Activated T-helper 2 cell treated with anti-CD3 and anti-CD28 coated beads, Interferon-gamma antibody, Interleukin-2, Interleukin-4, amounts not matched to agents 10 μg/mL and 5 μg/mL and 100 μg/mL, durations not matched to agents 14 hours and 24 hours and 36 hours (primary cell): ENCODE measurements at regions of chr3 and their contacts with region 1.

Region 1: GRCh38 chr3:177426878-177427495 is 229.7 kb upstream of the TBL1XR1 start:
- DNase-seq: peak; percentile 58
- H3K4me3 Mint-ChIP-seq: peak overlapping the region; percentile 54
- H3K27ac Mint-ChIP-seq: peak overlapping the region; percentile 85
- H3K4me1 Mint-ChIP-seq: peaks cover 35% of the 10 kb centered on the region
- H3K27me3 Mint-ChIP-seq: peaks cover 2% of the 10 kb centered on the region

Region 2: GRCh38 chr3:177057768-177058167 is 369.2 kb before region 1 on chr3:
- intact Hi-C with region 1: loop called (anchors 2 kb)
- DNase-seq: peak; percentile 22
- H3K4me3 Mint-ChIP-seq: no peak overlapping the region
- H3K27ac Mint-ChIP-seq: no peak overlapping the region
- H3K4me1 Mint-ChIP-seq: peaks cover 22% of the 10 kb centered on the region
- H3K27me3 Mint-ChIP-seq: no peaks in the 10 kb centered on the region

Region 3: GRCh38 chr3:177314897-177315296 is 112.1 kb before region 1 on chr3:
- intact Hi-C with region 1: loop called (anchors 1 kb)
- DNase-seq: no peak
- H3K4me3 Mint-ChIP-seq: no peak overlapping the region
- H3K27ac Mint-ChIP-seq: peak overlapping the region; percentile 49
- H3K4me1 Mint-ChIP-seq: peaks cover 12% of the 10 kb centered on the region
- H3K27me3 Mint-ChIP-seq: peaks cover 2% of the 10 kb centered on the region

Region 4: GRCh38 chr3:177589911-177590381 is 163.0 kb after region 1 on chr3:
- intact Hi-C with region 1: loop called (anchors 2 kb)
- DNase-seq: no peak
- H3K4me3 Mint-ChIP-seq: no peak overlapping the region
- H3K27ac Mint-ChIP-seq: peak overlapping the region; percentile 9
- H3K4me1 Mint-ChIP-seq: peaks cover 32% of the 10 kb centered on the region
- H3K27me3 Mint-ChIP-seq: peaks cover 4% of the 10 kb centered on the region

Region 5: GRCh38 chr3:177994976-177995375 is 568.0 kb after region 1 on chr3:
- intact Hi-C with region 1: loop called (anchors 2 kb)
- DNase-seq: no peak
- H3K4me3 Mint-ChIP-seq: no peak overlapping the region
- H3K27ac Mint-ChIP-seq: peak overlapping the region; percentile 84
- H3K4me1 Mint-ChIP-seq: peaks cover 23% of the 10 kb centered on the region
- H3K27me3 Mint-ChIP-seq: no peaks in the 10 kb centered on the region